ENCODE measurements at regions of chr9 and their contacts with region 1.

Region 1: DNA sequence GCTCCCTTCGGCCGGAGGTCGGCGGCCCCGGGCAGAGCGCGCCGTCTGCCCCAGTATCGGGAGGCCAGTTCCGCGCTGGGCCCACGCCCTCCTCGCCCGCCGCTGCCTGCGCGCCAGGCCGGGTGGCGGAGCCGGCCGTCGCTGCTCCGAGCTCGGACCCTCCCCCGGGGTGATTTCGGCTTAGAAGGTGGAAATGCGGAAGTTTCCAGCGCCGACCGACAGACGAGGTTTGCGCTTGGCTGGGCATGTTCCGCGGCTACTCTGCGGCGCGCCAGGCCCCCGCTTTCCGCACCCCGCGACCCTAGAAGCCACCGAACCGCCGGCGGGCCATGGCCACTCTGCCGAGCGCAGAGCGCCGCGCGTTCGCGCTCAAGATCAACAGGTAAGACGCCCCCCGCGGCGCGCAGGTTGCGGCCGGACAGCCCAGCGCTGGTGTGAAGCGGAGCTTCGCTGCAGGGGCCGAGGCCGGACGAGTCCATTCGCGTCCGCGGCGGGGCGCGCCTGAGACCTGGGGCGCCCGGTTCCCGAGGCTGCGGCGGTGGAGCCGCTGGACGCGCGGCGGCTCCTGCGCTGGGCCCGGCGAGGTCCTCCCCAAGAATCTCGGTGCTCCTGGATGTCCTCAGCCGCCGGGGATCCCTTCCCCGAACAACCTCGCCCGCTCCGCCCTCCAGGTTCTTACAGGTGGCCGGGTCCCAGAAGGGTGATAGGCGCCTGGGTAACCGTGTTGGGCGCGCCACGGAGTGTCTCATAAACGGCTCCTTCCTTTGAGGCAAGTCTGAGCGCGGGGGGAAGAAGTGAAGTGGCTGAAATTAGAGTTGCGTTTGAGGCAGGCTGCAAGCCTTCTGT is at the start of gene DOCK8:
- DNase-seq: peak; percentile 42 to 68 (median 55)
- H3K4me3 ChIP-seq: peak within 1 kb of the TSS; percentile 27 to 68
- H3K4me3 Mint-ChIP-seq: peak within 1 kb of the TSS; percentile 89 to 94 (median 92)
- H3K27ac ChIP-seq: peak within 1 kb of the TSS; percentile 48
- H3K27ac Mint-ChIP-seq: peak within 1 kb of the TSS; percentile 42 to 92 (median 84)
- H3K4me1 ChIP-seq: peaks cover 19% of the 10 kb centered on the region
- H3K4me1 Mint-ChIP-seq: peaks cover 11 to 29% (median 18%) of the 10 kb centered on the region in 4 donors
- H3K27me3 ChIP-seq: no peaks in the 10 kb centered on the region
- H3K27me3 Mint-ChIP-seq: no peaks in the 10 kb centered on the region
- total RNA-seq, gene DOCK8: 307 to 315 TPM

Region 2: DNA sequence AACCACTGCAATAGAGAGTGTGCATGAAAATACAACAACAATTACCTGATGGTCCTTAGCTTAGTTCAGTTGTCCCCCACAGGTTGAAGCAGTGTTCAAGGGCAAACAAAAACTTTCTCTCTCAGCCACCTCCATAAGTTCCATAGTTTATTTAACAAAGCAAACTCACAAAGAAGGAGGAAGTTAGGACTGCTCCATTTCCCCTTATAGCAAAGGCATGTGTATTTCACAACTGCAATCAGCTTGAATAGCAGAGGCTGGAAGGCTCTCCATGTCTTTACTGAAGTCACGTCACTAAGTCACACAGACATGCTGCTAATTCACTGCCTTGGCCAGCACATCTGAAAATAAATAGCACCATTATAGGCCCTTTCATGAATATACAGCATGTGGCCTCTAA is 43.1 kb after region 1 on chr9:
- CTCF ChIA-PET with region 1: interaction called, 4 read pairs
- POLR2A ChIA-PET with region 1: no interaction called
- intact Hi-C with region 1: loop called (anchors 2 kb)
- DNase-seq: no peak
- H3K4me3 ChIP-seq: no peak overlapping the region
- H3K4me3 Mint-ChIP-seq: no peak overlapping the region
- H3K27ac ChIP-seq: no peak overlapping the region
- H3K27ac Mint-ChIP-seq: peak overlapping the region in 1 of 7 donors; percentile 44
- H3K4me1 ChIP-seq: no peaks in the 10 kb centered on the region
- H3K4me1 Mint-ChIP-seq: no peaks in the 10 kb centered on the region
- H3K27me3 ChIP-seq: no peaks in the 10 kb centered on the region
- H3K27me3 Mint-ChIP-seq: no peaks in the 10 kb centered on the region

Region 3: DNA sequence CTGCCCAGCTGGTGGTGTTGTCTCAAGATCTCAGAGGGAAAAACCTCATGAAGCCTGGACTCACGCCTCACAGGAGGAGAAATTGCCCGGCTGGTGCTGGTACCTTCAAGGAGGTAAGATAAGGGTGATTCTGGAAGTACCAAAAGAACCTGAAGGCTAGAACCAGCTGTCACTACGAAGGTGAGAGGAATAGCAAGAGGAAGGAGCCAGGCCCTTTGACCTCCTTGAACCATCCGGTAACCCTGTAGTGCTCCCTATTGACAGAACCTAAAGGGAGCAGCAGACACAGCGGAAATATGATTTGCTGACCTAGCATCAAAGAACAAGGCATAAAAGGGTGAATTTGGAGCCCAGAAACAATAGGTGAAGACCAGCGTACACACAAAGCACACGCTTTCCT is 92.0 kb after region 1 on chr9:
- CTCF ChIA-PET with region 1: interaction called, 32 read pairs
- POLR2A ChIA-PET with region 1: interaction called, 18 read pairs
- intact Hi-C with region 1: loop called (anchors 1 kb)
- DNase-seq: peak; percentile 50 to 70 (median 60)
- H3K4me3 ChIP-seq: no peak overlapping the region
- H3K4me3 Mint-ChIP-seq: no peak overlapping the region
- H3K27ac ChIP-seq: no peak overlapping the region
- H3K27ac Mint-ChIP-seq: peak overlapping the region; percentile 24 to 83 (median 78)
- H3K4me1 ChIP-seq: peaks cover 4% of the 10 kb centered on the region
- H3K4me1 Mint-ChIP-seq: peaks cover 18 to 34% (median 20%) of the 10 kb centered on the region in 4 donors
- H3K27me3 ChIP-seq: no peaks in the 10 kb centered on the region
- H3K27me3 Mint-ChIP-seq: no peaks in the 10 kb centered on the region

Measured in CD4-positive, alpha-beta memory T cell (primary cell).